Natural killer cell (primary cell): ENCODE measurements at regions of chr14 and their contacts with region 1.

Region 1: GRCh38 chr14:73633116-73634010 is 11.4 kb upstream of the DNAL1 start:
- DNase-seq: peak; percentile 42 to 81
- ATAC-seq: peak; percentile 79 to 87 (median 85)
- H3K4me3 ChIP-seq: peak overlapping the region; percentile 44
- H3K4me3 Mint-ChIP-seq: peak overlapping the region; percentile 80
- H3K27ac ChIP-seq: no peak overlapping the region
- H3K27ac Mint-ChIP-seq: peak overlapping the region; percentile 26 to 75
- H3K4me1 ChIP-seq: peaks cover 17% of the 10 kb centered on the region
- H3K4me1 Mint-ChIP-seq: peaks cover 6 to 14% of the 10 kb centered on the region in 2 donors
- H3K27me3 ChIP-seq: no peaks in the 10 kb centered on the region
- H3K27me3 Mint-ChIP-seq: peaks cover 0 to 8% of the 10 kb centered on the region in 2 donors
- CTCF ChIP-seq: peak; percentile 78

Region 2: GRCh38 chr14:73503648-73504047 is 129.7 kb before region 1 on chr14:
- intact Hi-C with region 1: loop called (anchors 1 kb)
- DNase-seq: peak in 1 of 2 donors; percentile 38
- ATAC-seq: peak in 1 of 3 donors; percentile 35
- H3K4me3 ChIP-seq: no peak overlapping the region
- H3K4me3 Mint-ChIP-seq: no peak overlapping the region
- H3K27ac ChIP-seq: no peak overlapping the region
- H3K27ac Mint-ChIP-seq: no peak overlapping the region
- H3K4me1 ChIP-seq: no peaks in the 10 kb centered on the region
- H3K4me1 Mint-ChIP-seq: peaks cover 4 to 5% of the 10 kb centered on the region in 2 donors
- H3K27me3 ChIP-seq: no peaks in the 10 kb centered on the region
- H3K27me3 Mint-ChIP-seq: no peaks in the 10 kb centered on the region
- CTCF ChIP-seq: no peak

Region 3: DNA sequence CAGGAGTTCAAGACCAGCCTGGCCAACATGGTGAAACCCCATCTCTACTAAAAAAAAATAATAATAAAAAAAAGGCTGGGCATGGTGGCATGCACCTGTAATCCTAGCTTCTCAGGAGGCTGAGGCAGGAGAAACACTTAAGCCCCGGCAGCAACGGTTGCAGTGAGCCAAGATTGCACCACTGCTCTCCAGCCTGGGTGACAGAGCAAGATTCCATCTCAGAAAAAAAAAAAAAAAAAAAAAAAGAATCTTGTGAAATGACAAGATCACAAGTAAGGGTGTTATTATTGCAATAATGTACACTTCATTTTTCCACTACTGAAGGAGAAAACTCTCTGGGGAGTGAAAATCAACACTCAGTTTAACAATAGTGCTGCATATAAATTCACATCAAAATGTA is 209.5 kb after region 1 on chr14:
- intact Hi-C with region 1: no loop called
- DNase-seq: no peak
- ATAC-seq: no peak
- H3K4me3 ChIP-seq: no peak overlapping the region
- H3K4me3 Mint-ChIP-seq: no peak overlapping the region
- H3K27ac ChIP-seq: no peak overlapping the region
- H3K27ac Mint-ChIP-seq: no peak overlapping the region
- H3K4me1 ChIP-seq: no peaks in the 10 kb centered on the region
- H3K4me1 Mint-ChIP-seq: no peaks in the 10 kb centered on the region
- H3K27me3 ChIP-seq: no peaks in the 10 kb centered on the region
- H3K27me3 Mint-ChIP-seq: peaks cover 0 to 8% of the 10 kb centered on the region in 2 donors
- CTCF ChIP-seq: no peak